ENCODE measurements at regions of chr1 and their contacts with region 1.

Region 1: GRCh38 chr1:43902058-43902831 is 31.4 kb upstream of the ARTN start:
- DNase-seq: no peak
- ATAC-seq: no peak; the same call in 2 of the 3 replicates
- H3K4me3 ChIP-seq: no peak overlapping the region
- H3K27ac ChIP-seq: no peak overlapping the region
- H3K4me1 ChIP-seq: peaks cover 3 to 20% of the 10 kb centered on the region in 2 experiments; a peak in 3 of 5 replicates
- H3K27me3 ChIP-seq: no peaks in the 10 kb centered on the region
- CTCF ChIP-seq: no peak
- EP300 ChIP-seq: no peak
- POLR2A ChIP-seq: no peak
- RAD21 ChIP-seq: no peak

Region 2: GRCh38 chr1:43822040-43822439 is 80.2 kb before region 1 on chr1:
- CTCF ChIA-PET with region 1: no interaction called
- POLR2A ChIA-PET with region 1: no interaction called
- in situ Hi-C with region 1: no loop called
- intact Hi-C with region 1: no loop called
- DNase-seq: no peak
- ATAC-seq: no peak
- H3K4me3 ChIP-seq: no peak overlapping the region
- H3K27ac ChIP-seq: no peak overlapping the region
- H3K4me1 ChIP-seq: no peaks in the 10 kb centered on the region
- H3K27me3 ChIP-seq: no peaks in the 10 kb centered on the region
- CTCF ChIP-seq: no peak
- EP300 ChIP-seq: no peak
- POLR2A ChIP-seq: no peak
- RAD21 ChIP-seq: no peak

Region 3: DNA sequence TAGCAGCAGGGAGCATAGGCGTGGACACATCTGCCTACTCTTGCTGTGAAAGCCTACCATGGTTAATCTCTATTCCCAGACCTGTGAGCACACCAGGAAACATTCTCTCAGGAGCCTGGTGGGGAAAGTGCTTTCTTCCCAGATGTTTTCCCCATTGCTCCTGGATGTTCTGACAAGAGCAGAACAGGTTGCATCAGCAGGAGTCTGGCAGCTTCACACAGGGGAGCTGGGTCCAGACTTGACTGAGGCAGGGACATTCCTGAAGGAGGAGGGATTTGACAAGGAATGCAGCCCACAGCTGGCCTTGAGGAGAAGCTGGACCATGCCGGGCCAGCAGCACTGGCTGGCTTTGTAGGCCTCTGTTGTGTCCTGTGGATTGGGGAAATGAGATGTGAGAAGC is 10.4 kb after region 1 on chr1:
- CTCF ChIA-PET with region 1: no interaction called
- POLR2A ChIA-PET with region 1: interaction called, 19 read pairs
- in situ Hi-C with region 1: no loop called
- intact Hi-C with region 1: no loop called
- DNase-seq: no peak
- ATAC-seq: no peak; the same call in 2 of the 3 replicates
- H3K4me3 ChIP-seq: no peak overlapping the region
- H3K27ac ChIP-seq: no peak overlapping the region
- H3K4me1 ChIP-seq: peaks cover 0 to 5% of the 10 kb centered on the region in 2 experiments; a peak in 1 of 5 replicates
- H3K27me3 ChIP-seq: no peaks in the 10 kb centered on the region
- CTCF ChIP-seq: no peak
- EP300 ChIP-seq: no peak
- POLR2A ChIP-seq: no peak
- RAD21 ChIP-seq: no peak

Region 4: GRCh38 chr1:44144962-44145756 is 242.9 kb after region 1 on chr1:
- CTCF ChIA-PET with region 1: no interaction called
- POLR2A ChIA-PET with region 1: no interaction called
- in situ Hi-C with region 1: no loop called
- intact Hi-C with region 1: no loop called
- DNase-seq: no peak
- ATAC-seq: no peak
- H3K4me3 ChIP-seq: no peak overlapping the region
- H3K27ac ChIP-seq: no peak overlapping the region
- H3K4me1 ChIP-seq: no peaks in the 10 kb centered on the region
- H3K27me3 ChIP-seq: peaks cover 7 to 27% of the 10 kb centered on the region in 2 experiments
- CTCF ChIP-seq: no peak
- EP300 ChIP-seq: no peak
- POLR2A ChIP-seq: no peak
- RAD21 ChIP-seq: no peak